ENCODE measurements at regions of chr11 and their contacts with region 1.

Region 1: GRCh38 chr11:17250561-17251350 is 25.8 kb upstream of the NUCB2 start:
- DNase-seq: no peak
- ATAC-seq: no peak
- H3K4me3 ChIP-seq: no peak overlapping the region
- H3K27ac ChIP-seq: no peak overlapping the region
- H3K4me1 ChIP-seq: no peaks in the 10 kb centered on the region
- H3K27me3 ChIP-seq: no peaks in the 10 kb centered on the region
- CTCF ChIP-seq: no peak

Region 2: GRCh38 chr11:18567081-18567480 is 1316.3 kb after region 1 on chr11:
- CTCF ChIA-PET with region 1: no interaction called
- POLR2A ChIA-PET with region 1: interaction called, 10 read pairs
- in situ Hi-C with region 1: no loop called
- intact Hi-C with region 1: no loop called
- DNase-seq: no peak
- ATAC-seq: no peak
- H3K4me3 ChIP-seq: no peak overlapping the region
- H3K27ac ChIP-seq: no peak overlapping the region
- H3K4me1 ChIP-seq: no peaks in the 10 kb centered on the region
- H3K27me3 ChIP-seq: no peaks in the 10 kb centered on the region
- CTCF ChIP-seq: no peak